Right ventricle myocardium inferior (tissue), 1 donor: ENCODE measurements at regions of chr6 and their contacts with region 1.

Region 1: GRCh38 chr6:53294095-53294494 is 54.7 kb downstream of the ELOVL5 start:
- DNase-seq: no peak
- ATAC-seq: no peak

Region 2: DNA sequence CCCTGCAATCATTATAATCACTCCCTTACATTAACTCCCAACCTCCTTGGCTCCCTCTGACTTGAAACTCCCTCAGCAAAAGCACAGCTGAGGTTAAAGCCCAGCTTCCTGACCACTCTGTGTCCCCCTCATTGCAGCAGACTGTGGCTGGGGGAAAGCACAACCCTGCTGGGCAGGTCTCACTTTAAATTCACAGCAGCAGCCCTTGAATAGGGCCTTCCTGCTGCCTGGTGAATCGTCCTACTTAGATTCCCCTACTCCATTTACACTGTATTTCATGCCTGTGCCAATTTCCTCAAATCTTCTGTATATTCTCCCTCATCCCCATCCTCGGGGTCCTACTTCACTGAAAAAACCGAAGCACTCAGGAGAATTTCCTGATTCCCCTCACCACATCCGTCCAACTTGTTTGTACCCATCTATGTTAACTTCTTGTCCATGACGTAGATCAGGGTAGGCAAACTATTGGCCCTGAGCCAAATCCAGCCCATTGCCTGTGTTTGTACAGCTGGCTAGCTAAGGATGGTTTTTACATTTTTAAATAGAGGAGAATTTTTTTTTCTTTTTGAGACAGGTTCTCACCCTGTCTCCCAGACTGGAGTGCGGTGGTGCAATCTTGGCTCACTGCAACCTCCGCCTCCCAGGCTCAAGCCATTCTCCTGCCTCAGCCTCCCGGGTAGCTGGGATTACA is 114.0 kb before region 1 on chr6:
- intact Hi-C with region 1: loop called (anchors 5 kb)
- DNase-seq: no peak
- ATAC-seq: no peak

Region 3: GRCh38 chr6:53192682-53193188 is 101.4 kb before region 1 on chr6:
- intact Hi-C with region 1: no loop called
- DNase-seq: no peak
- ATAC-seq: peak; percentile 54

Region 4: GRCh38 chr6:53410508-53411258 is 116.6 kb after region 1 on chr6:
- intact Hi-C with region 1: loop called (anchors 10 kb)
- DNase-seq: no peak
- ATAC-seq: peak; percentile 84